ENCODE measurements at regions of chr18 and their contacts with region 1.

Region 1: DNA sequence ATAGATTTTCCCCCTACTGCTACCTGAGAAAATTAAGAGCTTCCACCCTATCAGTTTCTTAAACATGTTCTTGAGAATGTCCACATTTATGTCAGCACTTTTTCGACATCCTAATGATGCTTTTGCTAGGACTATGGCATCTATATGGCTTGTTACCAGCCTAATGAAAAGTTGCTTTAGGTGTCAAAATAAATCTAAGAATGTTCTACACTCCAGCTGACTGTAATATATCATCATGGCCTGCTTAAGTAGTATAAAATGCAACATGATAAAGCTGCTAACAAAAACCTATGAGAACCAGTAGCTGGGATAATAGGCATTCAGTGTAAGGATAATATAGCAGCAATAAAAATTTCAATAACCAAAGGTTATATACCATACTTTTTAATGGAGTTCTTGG is 1983.5 kb upstream of the CELF4 start:
- DNase-seq: no peak
- ATAC-seq: no peak
- H3K4me3 ChIP-seq: no peak overlapping the region
- H3K27ac ChIP-seq: no peak overlapping the region
- H3K4me1 ChIP-seq: no peaks in the 10 kb centered on the region
- H3K27me3 ChIP-seq: no peaks in the 10 kb centered on the region
- CTCF ChIP-seq: no peak
- EP300 ChIP-seq: no peak
- POLR2A ChIP-seq: no peak
- RAD21 ChIP-seq: no peak

Region 2: GRCh38 chr18:39604836-39605235 is 55.7 kb after region 1 on chr18:
- CTCF ChIA-PET with region 1: no interaction called
- POLR2A ChIA-PET with region 1: no interaction called
- RAD21 ChIA-PET with region 1: no interaction called
- SMC1A ChIA-PET with region 1: no interaction called
- in situ Hi-C with region 1: no loop called
- intact Hi-C with region 1: loop called (anchors 10 kb)
- DNase-seq: no peak
- ATAC-seq: no peak
- H3K4me3 ChIP-seq: no peak overlapping the region
- H3K27ac ChIP-seq: no peak overlapping the region
- H3K4me1 ChIP-seq: no peaks in the 10 kb centered on the region
- H3K27me3 ChIP-seq: no peaks in the 10 kb centered on the region
- CTCF ChIP-seq: no peak
- EP300 ChIP-seq: no peak
- POLR2A ChIP-seq: no peak
- RAD21 ChIP-seq: no peak

Measured in GM12878 (cell line).